Activated B cell treated with CpG ODN at 0.5 μM for 24 hours (primary cell): ENCODE measurements at regions of chr20 and their contacts with region 1.

Region 1: DNA sequence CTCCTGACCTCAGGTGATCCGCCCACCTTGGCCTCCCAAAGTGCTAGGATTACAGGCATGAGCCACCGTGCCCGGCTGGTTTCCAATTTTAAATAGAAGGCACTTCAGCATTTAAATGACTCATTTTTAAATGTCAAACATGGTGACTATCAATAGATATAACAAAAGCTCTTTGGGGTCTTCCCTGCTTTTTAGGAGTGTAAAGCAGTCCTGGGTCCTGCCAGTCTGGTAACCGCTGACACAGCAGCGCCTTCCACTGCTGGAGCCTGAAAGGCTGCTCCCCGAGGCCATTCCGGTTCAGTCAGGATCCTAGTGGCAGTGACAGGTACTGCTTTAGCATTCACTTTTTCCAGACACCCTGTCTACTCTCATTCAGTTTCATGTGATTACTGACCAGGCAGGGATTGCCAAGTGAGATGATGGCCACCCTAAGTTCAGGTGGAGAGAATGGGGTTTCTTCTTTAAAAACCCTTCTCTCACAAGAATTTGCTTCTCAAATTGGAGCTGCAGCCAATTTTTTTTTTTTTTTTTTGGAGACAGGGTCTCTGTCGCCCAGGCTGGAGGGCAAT is 5.1 kb downstream of the DIDO1 start:
- DNase-seq: no peak
- ATAC-seq: peak; percentile 53
- H3K4me3 Mint-ChIP-seq: peak overlapping the region; percentile 69
- H3K27ac Mint-ChIP-seq: peak overlapping the region; percentile 65
- H3K4me1 Mint-ChIP-seq: peaks cover 87% of the 10 kb centered on the region
- H3K27me3 Mint-ChIP-seq: no peaks in the 10 kb centered on the region
- CTCF ChIP-seq: no peak

Region 2: DNA sequence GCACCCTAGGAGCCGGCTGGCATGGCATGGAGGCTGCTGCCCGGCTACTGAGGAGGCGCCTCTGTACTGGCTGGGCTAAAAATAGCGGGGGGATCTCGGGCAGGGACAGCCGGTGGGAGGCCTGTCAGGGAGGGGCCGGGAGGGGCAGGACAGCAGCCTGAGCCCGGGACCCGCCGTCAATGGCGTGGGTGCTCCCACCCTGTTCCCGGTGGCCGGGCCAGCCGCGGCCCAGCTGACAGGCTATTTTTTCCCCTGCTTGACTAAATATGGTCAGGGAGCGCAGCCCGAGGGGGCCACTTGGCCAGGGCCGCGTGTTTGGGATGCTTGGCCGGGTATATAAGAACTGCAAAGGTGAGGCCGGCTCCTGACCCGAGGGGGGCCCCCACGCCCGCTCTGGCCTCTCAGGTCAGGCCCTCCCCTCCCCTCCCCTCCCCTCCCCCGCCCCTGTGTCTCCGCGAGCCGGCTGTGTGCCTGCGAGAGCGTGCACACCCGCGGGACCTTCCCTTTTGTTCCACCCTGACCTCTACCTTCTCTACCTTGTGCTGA is 371.0 kb before region 1 on chr20:
- CTCF ChIA-PET with region 1: no interaction called
- POLR2A ChIA-PET with region 1: no interaction called
- intact Hi-C with region 1: no loop called
- DNase-seq: no peak
- ATAC-seq: peak; percentile 20
- H3K4me3 Mint-ChIP-seq: peak overlapping the region; percentile 78
- H3K27ac Mint-ChIP-seq: no peak overlapping the region
- H3K4me1 Mint-ChIP-seq: peaks cover 9% of the 10 kb centered on the region
- H3K27me3 Mint-ChIP-seq: peaks cover 35% of the 10 kb centered on the region
- CTCF ChIP-seq: no peak

Region 3: GRCh38 chr20:62900052-62900691 is 21.0 kb before region 1 on chr20:
- CTCF ChIA-PET with region 1: interaction called, 26 read pairs
- POLR2A ChIA-PET with region 1: interaction called, 5 read pairs
- intact Hi-C with region 1: loop called (anchors 1 kb)
- DNase-seq: peak; percentile 55
- ATAC-seq: peak; percentile 98
- H3K4me3 Mint-ChIP-seq: peak overlapping the region; percentile 46
- H3K27ac Mint-ChIP-seq: peak overlapping the region; percentile 35
- H3K4me1 Mint-ChIP-seq: peaks cover 25% of the 10 kb centered on the region
- H3K27me3 Mint-ChIP-seq: no peaks in the 10 kb centered on the region
- CTCF ChIP-seq: peak; percentile 81

Region 4: GRCh38 chr20:62907384-62908317 is 13.6 kb before region 1 on chr20:
- CTCF ChIA-PET with region 1: interaction called, 26 read pairs
- POLR2A ChIA-PET with region 1: interaction called, 4 read pairs
- intact Hi-C with region 1: no loop called
- DNase-seq: no peak
- ATAC-seq: peak; percentile 62
- H3K4me3 Mint-ChIP-seq: no peak overlapping the region
- H3K27ac Mint-ChIP-seq: no peak overlapping the region
- H3K4me1 Mint-ChIP-seq: peaks cover 15% of the 10 kb centered on the region
- H3K27me3 Mint-ChIP-seq: no peaks in the 10 kb centered on the region
- CTCF ChIP-seq: no peak

Region 5: DNA sequence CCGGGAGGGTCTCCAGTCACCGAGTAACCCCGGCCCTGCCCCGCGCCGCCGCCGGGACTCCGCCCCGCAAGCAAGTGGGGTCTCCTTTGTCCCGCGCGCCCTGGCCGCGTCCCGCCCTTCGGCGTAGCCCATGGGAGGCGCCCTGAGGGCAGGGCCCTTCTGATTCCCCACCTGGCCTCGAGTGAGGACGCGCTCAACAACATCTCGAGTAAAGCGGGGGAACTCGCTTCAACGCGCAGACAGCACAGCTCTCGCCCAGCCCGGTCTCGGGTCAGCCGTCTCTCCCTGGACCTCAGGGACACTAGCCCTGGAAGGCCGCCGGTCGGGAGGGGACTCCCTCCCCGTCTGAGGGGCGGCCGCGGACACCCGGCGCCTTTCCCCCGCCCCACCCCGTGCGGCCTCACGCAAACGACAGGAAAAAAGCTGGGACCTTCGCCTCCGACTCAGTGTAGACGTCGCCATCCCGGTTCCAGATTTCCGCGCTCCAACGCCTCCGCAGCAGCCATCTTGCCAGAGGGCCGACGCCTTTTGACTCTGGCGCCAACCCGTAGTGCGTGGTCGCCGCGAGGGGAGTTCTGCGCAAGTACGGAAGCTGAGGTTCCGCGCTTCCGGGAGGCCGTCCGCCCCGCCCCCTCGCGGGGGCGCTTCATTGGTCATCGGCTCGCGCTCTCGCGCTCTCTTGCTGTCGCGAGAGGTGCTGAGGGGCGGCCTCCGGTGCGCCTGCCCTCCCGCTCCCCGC is 16.3 kb after region 1 on chr20:
- CTCF ChIA-PET with region 1: interaction called, 3 read pairs
- POLR2A ChIA-PET with region 1: interaction called, 68 read pairs
- intact Hi-C with region 1: loop called (anchors 1 kb)
- DNase-seq: peak; percentile 97
- ATAC-seq: peak; percentile 88
- H3K4me3 Mint-ChIP-seq: peak overlapping the region; percentile 94
- H3K27ac Mint-ChIP-seq: peak overlapping the region; percentile 94
- H3K4me1 Mint-ChIP-seq: peaks cover 42% of the 10 kb centered on the region
- H3K27me3 Mint-ChIP-seq: no peaks in the 10 kb centered on the region
- CTCF ChIP-seq: no peak